ENCODE measurements at regions of chr1 and their contacts with region 1.

Region 1: GRCh38 chr1:27097484-27097917 is 57.4 kb downstream of the SLC9A1 start:
- DNase-seq: peak; percentile 92

Region 2: GRCh38 chr1:26993237-26994019 is 104.1 kb before region 1 on chr1 and contains the start of gene TRNP1:
- intact Hi-C with region 1: loop called (anchors 2 to 5 kb)
- DNase-seq: peak; percentile 89
- total RNA-seq, gene TRNP1: 10.7 to 13.2 TPM

Region 3: DNA sequence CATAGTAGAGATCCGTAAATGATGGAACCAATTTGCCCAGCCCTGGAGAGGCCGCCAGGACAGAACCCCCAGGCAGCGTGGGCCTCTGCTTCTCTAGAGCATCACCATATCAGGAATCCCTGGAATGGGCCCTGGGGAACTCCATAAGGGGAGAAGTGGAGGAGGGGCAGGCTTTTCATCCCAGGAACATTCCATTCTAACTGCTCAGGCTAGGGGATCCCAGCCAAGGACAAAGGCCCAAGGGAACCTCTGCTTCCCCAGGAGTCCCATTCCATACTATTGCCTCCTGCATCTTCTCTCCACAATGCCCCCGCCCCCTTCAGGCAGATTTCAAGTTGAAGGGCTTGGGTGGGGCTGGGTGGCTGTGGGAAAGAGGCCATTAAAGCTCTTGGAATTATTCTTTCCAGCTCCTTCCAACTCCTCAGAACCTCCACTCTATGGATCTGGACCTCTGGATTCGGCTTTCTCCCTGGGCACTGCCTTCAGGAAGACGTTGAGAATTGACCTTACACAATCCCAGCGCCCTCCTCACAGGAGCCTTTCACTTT is 98.0 kb before region 1 on chr1:
- intact Hi-C with region 1: loop called (anchors 2 to 5 kb)
- DNase-seq: peak; percentile 88

Region 4: GRCh38 chr1:27044613-27045151 is 52.8 kb before region 1 on chr1:
- intact Hi-C with region 1: loop called (anchors 2 to 10 kb)
- DNase-seq: peak; percentile 97

Region 5: GRCh38 chr1:27122652-27123051 is 25.2 kb after region 1 on chr1:
- intact Hi-C with region 1: no loop called
- DNase-seq: no peak